CD8-positive, alpha-beta T cell (primary cell): ENCODE measurements at regions of chr12 and their contacts with region 1.

Region 1: GRCh38 chr12:76489737-76490136 is 69.8 kb downstream of the OSBPL8 start:
- DNase-seq: no peak
- ATAC-seq: no peak
- H3K4me3 ChIP-seq: no peak overlapping the region
- H3K4me3 Mint-ChIP-seq: no peak overlapping the region
- H3K27ac ChIP-seq: no peak overlapping the region
- H3K27ac Mint-ChIP-seq: peak overlapping the region; percentile 25
- H3K4me1 ChIP-seq: no peaks in the 10 kb centered on the region
- H3K4me1 Mint-ChIP-seq: peaks cover 38% of the 10 kb centered on the region
- H3K27me3 ChIP-seq: no peaks in the 10 kb centered on the region
- H3K27me3 Mint-ChIP-seq: no peaks in the 10 kb centered on the region
- CTCF ChIP-seq: no peak

Region 2: DNA sequence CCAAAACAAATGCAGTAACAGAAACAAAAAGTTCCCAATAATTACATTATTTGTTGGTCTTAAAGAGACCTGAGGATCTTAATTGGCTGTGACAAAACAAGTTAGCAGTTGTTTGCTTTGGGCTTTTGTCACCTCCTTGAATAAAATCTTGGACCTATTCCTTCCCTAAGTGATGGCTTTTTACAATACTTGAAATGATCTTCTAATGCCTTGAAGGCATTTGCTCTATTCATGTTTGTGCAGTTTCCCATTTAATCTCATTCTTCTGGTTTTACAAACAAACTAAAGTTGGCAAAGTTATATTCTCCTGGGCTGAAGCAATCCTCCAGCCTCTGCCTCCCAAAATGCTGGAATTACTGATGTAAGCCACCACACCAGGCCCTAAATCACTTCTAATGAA is 28.9 kb before region 1 on chr12:
- CTCF ChIA-PET with region 1: no interaction called
- POLR2A ChIA-PET with region 1: no interaction called
- intact Hi-C with region 1: loop called in 1 of 2 experiments (anchors 1 kb)
- DNase-seq: no peak
- ATAC-seq: no peak
- H3K4me3 ChIP-seq: no peak overlapping the region
- H3K4me3 Mint-ChIP-seq: no peak overlapping the region
- H3K27ac ChIP-seq: peak overlapping the region in 1 of 2 experiments; percentile 2
- H3K27ac Mint-ChIP-seq: peak overlapping the region; percentile 73
- H3K4me1 ChIP-seq: peaks cover 5% of the 10 kb centered on the region
- H3K4me1 Mint-ChIP-seq: peaks cover 52% of the 10 kb centered on the region
- H3K27me3 ChIP-seq: no peaks in the 10 kb centered on the region
- H3K27me3 Mint-ChIP-seq: no peaks in the 10 kb centered on the region
- CTCF ChIP-seq: no peak